ENCODE measurements at regions of chr10 and their contacts with region 1.

Region 1: GRCh38 chr10:110600487-110601101 is 33.1 kb downstream of the SMC3 start:
- DNase-seq: peak; percentile 38
- H3K4me3 ChIP-seq: no peak overlapping the region
- H3K27ac ChIP-seq: no peak overlapping the region
- H3K27me3 ChIP-seq: no peaks in the 10 kb centered on the region
- CTCF ChIP-seq: peak; percentile 54

Region 2: GRCh38 chr10:110304780-110305421 is 295.7 kb before region 1 on chr10 and contains the start of gene SMNDC1:
- CTCF ChIA-PET with region 1: interaction called, 100 read pairs
- POLR2A ChIA-PET with region 1: no interaction called
- DNase-seq: peak; percentile 95
- H3K4me3 ChIP-seq: peak within 1 kb of the TSS; percentile 80
- H3K27ac ChIP-seq: peak within 1 kb of the TSS; percentile 92
- H3K27me3 ChIP-seq: no peaks in the 10 kb centered on the region
- CTCF ChIP-seq: no peak
- polyA plus RNA-seq, gene SMNDC1: 20.1 and 26.4 TPM in 2 replicates

Region 3: GRCh38 chr10:110311357-110311949 is 289.1 kb before region 1 on chr10:
- CTCF ChIA-PET with region 1: interaction called, 100 read pairs
- POLR2A ChIA-PET with region 1: no interaction called
- DNase-seq: peak; percentile 26
- H3K4me3 ChIP-seq: no peak overlapping the region
- H3K27ac ChIP-seq: no peak overlapping the region
- H3K27me3 ChIP-seq: no peaks in the 10 kb centered on the region
- CTCF ChIP-seq: peak; percentile 73

Region 4: DNA sequence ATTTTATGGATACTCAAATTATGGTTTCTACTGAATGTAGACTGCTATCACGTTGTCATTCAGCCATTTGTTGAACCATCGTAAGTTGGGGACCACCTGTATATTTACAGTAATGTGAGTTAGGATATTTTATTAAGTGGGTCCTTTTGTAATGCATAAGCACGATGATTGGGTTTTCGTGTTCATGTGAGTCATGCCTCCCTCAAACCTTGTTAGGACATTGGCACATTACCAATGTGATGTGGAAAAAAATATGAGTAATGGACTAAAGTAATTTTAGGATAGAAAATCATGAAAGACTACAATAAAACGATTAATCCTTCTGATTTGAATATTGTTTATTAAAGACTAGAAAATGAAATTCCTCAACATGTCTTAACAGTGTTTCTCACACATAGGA is 24.4 kb before region 1 on chr10:
- CTCF ChIA-PET with region 1: interaction called, 20 read pairs
- POLR2A ChIA-PET with region 1: no interaction called
- DNase-seq: no peak
- H3K4me3 ChIP-seq: no peak overlapping the region
- H3K27ac ChIP-seq: no peak overlapping the region
- H3K27me3 ChIP-seq: no peaks in the 10 kb centered on the region
- CTCF ChIP-seq: no peak

Region 5: DNA sequence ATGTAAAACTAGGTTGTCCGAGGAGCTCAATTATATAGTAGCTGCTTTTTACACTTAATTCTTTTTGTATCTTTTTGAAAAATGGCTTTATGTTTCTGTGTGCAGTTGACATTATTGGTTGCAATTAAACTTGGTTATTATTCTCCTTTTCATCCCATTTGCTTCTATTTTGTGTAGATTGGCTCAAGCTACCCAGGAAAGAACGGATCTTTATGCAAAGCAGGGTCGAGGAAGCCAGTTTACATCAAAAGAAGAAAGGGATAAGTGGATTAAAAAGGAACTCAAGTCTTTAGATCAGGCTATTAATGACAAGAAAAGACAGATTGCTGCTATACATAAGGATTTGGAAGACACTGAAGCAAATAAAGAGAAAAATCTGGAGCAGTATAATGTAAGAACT is 16.6 kb before region 1 on chr10:
- CTCF ChIA-PET with region 1: interaction called, 22 read pairs
- POLR2A ChIA-PET with region 1: interaction called, 5 read pairs
- DNase-seq: no peak
- H3K4me3 ChIP-seq: no peak overlapping the region
- H3K27ac ChIP-seq: no peak overlapping the region
- H3K27me3 ChIP-seq: no peaks in the 10 kb centered on the region
- CTCF ChIP-seq: no peak

Measured in AG04450 (cell line).